ENCODE measurements at regions of chr10 and their contacts with region 1.

Region 1: DNA sequence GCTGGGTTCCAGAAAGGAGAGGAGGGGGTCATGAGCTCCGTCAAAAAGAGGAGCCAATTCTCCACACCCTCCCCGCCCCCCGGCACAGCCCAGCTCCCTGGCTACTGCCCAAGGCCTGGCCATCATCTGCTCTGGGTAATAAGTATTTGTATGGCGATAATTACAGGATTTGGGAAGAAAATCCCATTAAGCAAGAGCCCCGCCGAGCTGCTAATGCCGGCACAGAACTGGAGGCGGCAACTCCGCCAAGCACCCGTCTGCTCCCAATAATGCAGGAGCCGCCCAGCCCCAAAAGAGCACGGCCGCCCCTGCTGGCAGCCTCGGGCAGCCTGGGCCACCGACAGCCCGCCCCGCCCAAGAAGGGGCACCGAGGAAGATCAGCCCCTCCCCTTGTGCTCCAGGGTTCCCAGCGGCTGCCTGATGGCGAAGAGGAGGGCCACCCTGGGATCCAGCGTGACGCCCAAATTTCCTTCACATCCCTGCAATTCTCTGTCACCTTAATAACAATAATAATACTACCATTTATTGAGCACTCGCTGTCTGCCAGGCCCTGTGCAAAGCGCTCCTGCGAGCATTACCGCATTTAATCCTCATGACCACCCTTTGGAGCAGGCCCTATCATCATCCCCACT is 5.9 kb downstream of the SLIT1 start:
- DNase-seq: no peak
- H3K4me3 ChIP-seq: no peak overlapping the region
- H3K4me3 Mint-ChIP-seq: no peak overlapping the region
- H3K27ac Mint-ChIP-seq: no peak overlapping the region
- H3K4me1 ChIP-seq: no peaks in the 10 kb centered on the region
- H3K4me1 Mint-ChIP-seq: no peaks in the 10 kb centered on the region
- H3K27me3 ChIP-seq: no peaks in the 10 kb centered on the region; the same call in 1 of the 2 replicates
- H3K27me3 Mint-ChIP-seq: peaks cover 28% of the 10 kb centered on the region
- CTCF ChIP-seq: no peak

Region 2: GRCh38 chr10:97190450-97190849 is 10.6 kb after region 1 on chr10:
- CTCF ChIA-PET with region 1: interaction called, 11 read pairs
- POLR2A ChIA-PET with region 1: no interaction called
- intact Hi-C with region 1: no loop called
- DNase-seq: peak in 1 of 2 experiments; percentile 24
- H3K4me3 ChIP-seq: no peak overlapping the region
- H3K4me3 Mint-ChIP-seq: no peak overlapping the region
- H3K27ac Mint-ChIP-seq: no peak overlapping the region
- H3K4me1 ChIP-seq: peaks cover 9% of the 10 kb centered on the region; the same call in 1 of the 2 replicates
- H3K4me1 Mint-ChIP-seq: peaks cover 13% of the 10 kb centered on the region
- H3K27me3 ChIP-seq: no peaks in the 10 kb centered on the region
- H3K27me3 Mint-ChIP-seq: peaks cover 3% of the 10 kb centered on the region
- CTCF ChIP-seq: no peak

Region 3: GRCh38 chr10:97596101-97597062 is 416.5 kb after region 1 on chr10:
- CTCF ChIA-PET with region 1: no interaction called
- POLR2A ChIA-PET with region 1: no interaction called
- intact Hi-C with region 1: no loop called
- DNase-seq: no peak
- H3K4me3 ChIP-seq: no peak overlapping the region
- H3K4me3 Mint-ChIP-seq: no peak overlapping the region
- H3K27ac Mint-ChIP-seq: no peak overlapping the region
- H3K4me1 ChIP-seq: no peaks in the 10 kb centered on the region
- H3K4me1 Mint-ChIP-seq: peaks cover 18% of the 10 kb centered on the region
- H3K27me3 ChIP-seq: no peaks in the 10 kb centered on the region
- H3K27me3 Mint-ChIP-seq: no peaks in the 10 kb centered on the region
- CTCF ChIP-seq: no peak